ENCODE measurements at regions of chr3 and their contacts with region 1.

Region 1: GRCh38 chr3:100329800-100330489 is 4.6 kb upstream of the NIT2 start:
- DNase-seq: no peak

Region 2: DNA sequence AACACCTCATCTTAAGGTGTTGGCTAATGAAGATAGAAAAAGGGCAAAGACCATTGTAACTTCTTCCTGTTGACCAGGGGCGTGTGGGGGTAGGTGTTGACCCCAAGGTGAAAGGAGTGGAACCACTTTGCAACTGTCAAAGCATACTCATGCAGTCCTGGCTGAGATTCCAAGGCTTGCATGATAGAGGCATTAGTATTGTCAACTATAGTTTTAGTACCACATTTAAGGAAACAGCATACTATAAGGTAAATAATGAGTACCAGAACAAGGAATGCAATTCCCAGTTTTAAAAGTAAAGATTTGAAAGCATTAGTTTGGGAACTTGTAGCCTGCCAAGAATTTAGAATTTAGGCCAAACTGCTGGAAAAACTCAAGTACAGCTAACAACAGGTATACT is 251.7 kb after region 1 on chr3:
- intact Hi-C with region 1: loop called in 1 of 2 experiments (anchors 10 kb)
- DNase-seq: no peak

Measured in posterior vena cava (tissue), 2 donors.